BJ (cell line): ENCODE measurements at regions of chr11 and their contacts with region 1.

Region 1: DNA sequence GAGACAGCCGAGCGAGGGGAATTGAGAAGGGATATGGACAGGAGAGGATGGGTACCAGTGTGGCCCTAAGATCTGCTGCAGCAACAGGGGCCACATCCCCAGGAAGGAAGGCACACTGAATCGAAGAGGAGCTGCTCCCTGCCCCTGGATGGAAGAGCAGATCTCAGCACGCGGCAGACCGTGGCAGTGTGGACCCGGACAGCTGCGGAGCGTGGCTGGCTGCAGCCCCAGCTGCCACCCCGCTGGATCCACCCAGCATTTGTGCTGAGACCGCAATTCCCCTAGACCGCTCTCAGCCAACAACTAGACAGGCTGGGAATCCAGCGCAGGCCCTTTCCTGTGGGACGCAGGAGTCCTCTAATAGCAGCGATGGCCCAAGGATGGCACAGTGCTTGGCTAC is 94.7 kb downstream of the NECTIN1 start:
- DNase-seq: no peak
- H3K4me3 ChIP-seq: no peak overlapping the region
- H3K27me3 ChIP-seq: peaks cover 6% of the 10 kb centered on the region; the same call in 1 of the 2 replicates
- CTCF ChIP-seq: no peak

Region 2: GRCh38 chr11:119195680-119196079 is 438.6 kb before region 1 on chr11:
- CTCF ChIA-PET with region 1: no interaction called
- POLR2A ChIA-PET with region 1: no interaction called
- DNase-seq: no peak
- H3K4me3 ChIP-seq: no peak overlapping the region
- H3K27me3 ChIP-seq: no peaks in the 10 kb centered on the region
- CTCF ChIP-seq: no peak

Region 3: DNA sequence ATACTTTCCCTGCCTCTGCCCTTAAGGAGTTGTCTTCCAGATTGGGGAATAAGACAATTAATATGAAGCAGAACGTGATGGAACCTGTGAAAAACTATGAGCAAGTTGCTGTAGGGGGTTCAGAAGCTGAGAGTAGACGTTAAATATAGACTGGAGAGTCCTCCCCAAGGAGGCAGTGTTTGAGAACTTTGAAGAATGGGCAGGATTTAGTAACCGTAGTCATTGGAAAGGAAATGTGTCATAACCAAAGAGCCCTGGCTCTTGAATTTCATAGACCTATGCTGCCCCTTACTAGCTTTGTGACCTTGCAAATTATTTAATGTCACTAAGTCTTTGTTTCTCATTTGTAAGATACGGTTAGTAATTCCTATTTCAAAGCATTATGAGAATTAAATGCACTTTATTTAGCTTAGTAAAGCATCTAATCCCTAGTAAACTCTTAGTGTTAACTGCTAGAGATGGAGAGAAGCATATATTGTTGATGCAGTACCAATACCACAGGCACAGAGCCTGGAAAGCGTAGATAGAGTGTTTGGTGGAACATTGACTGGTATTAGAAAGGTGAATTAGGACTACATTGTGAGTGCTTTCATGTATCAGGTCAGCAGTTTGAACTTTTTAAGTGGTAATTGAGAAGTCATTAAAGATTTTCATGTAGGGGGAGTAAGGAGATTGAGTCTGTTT is 371.5 kb before region 1 on chr11:
- CTCF ChIA-PET with region 1: no interaction called
- POLR2A ChIA-PET with region 1: no interaction called
- DNase-seq: no peak
- H3K4me3 ChIP-seq: no peak overlapping the region
- H3K27me3 ChIP-seq: no peaks in the 10 kb centered on the region
- CTCF ChIP-seq: no peak

Region 4: DNA sequence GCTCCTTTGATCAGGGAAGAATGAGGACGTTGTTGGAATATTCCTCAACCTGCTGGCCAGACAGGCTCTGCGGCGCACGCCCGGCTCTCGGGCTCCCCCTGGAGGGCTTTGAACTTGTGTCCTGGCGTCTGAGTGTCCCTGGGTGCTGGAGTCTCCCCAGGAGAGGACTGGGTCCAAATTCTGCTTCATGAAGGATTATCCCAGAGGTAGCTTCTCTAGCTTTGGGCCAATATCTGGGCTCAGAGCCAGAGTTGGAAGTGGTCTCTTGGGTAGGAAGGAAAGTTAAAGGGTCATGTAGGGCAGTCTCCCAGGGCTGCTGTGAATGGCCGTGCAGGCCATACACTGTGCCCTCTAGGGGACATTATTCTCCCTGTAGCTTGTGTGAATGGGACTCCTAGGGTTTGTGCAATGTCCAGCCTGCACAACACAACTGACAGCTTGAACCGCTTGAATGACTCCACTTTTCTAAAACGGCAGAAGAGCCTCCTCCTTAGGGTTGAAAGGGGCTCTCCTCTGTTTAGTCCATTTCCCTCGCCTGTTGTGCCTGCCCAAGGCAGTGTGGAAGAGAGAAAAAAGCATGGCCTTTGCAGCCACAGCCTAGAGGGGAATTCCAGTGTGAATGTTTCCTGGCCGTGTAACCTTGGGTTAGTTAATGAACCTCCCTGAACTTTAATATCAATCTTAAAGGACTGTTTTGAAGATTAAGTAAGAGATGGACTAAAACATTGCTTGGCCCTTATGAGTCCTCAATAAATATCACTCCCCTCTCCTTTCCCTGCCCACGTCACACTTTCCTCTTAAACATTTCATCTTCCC is 100.2 kb before region 1 on chr11:
- CTCF ChIA-PET with region 1: no interaction called
- POLR2A ChIA-PET with region 1: no interaction called
- DNase-seq: no peak
- H3K4me3 ChIP-seq: no peak overlapping the region
- H3K27me3 ChIP-seq: peaks cover 9% of the 10 kb centered on the region
- CTCF ChIP-seq: peak; percentile 93

Region 5: GRCh38 chr11:119624102-119624615 is 10.1 kb before region 1 on chr11:
- CTCF ChIA-PET with region 1: interaction called, 13 read pairs
- POLR2A ChIA-PET with region 1: no interaction called
- DNase-seq: no peak
- H3K4me3 ChIP-seq: no peak overlapping the region
- H3K27me3 ChIP-seq: peaks cover 3% of the 10 kb centered on the region; the same call in 1 of the 2 replicates
- CTCF ChIP-seq: peak; percentile 59

Region 6: DNA sequence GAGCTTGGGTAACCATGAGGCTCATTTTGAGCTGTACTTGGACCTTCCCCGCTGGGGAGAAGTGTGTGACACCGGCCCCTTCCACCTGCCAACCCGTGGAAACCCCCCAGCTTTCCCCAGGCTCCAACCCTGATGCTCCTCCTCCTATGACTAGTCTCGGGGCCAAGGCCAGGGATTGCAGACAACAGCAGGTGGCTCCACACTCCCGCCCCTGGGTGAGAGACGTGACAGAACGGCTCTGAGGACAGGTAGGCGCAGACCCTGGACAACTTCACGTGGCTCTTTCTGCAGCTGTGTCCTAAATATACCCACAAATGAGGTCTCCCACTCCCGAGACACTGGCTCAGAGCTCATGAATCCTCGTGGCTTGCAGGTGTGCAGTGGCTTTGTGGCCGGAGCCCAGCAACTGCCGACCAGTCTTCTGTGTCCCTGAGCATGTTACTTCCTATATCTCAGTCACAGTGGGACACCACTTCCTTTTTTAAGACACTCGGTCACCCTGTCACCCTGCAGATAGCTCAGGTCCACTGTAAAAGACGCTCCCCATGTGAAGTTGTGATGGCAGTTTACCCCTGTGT is 39.5 kb after region 1 on chr11:
- CTCF ChIA-PET with region 1: no interaction called
- POLR2A ChIA-PET with region 1: no interaction called
- DNase-seq: no peak
- H3K4me3 ChIP-seq: no peak overlapping the region
- H3K27me3 ChIP-seq: no peaks in the 10 kb centered on the region
- CTCF ChIP-seq: no peak